Left colon (tissue), 2 donors: ENCODE measurements at regions of chr3 and their contacts with region 1.

Region 1: GRCh38 chr3:69691860-69692259 is 47.4 kb upstream of the MITF start:
- DNase-seq: no peak
- ATAC-seq: no peak

Region 2: GRCh38 chr3:69137011-69137410 is 554.8 kb before region 1 on chr3:
- intact Hi-C with region 1: no loop called
- DNase-seq: no peak
- ATAC-seq: no peak

Region 3: GRCh38 chr3:69791919-69792399 is 100.1 kb after region 1 on chr3:
- intact Hi-C with region 1: loop called in 1 of 2 experiments (anchors 2 kb)
- DNase-seq: no peak
- ATAC-seq: no peak

Region 4: DNA sequence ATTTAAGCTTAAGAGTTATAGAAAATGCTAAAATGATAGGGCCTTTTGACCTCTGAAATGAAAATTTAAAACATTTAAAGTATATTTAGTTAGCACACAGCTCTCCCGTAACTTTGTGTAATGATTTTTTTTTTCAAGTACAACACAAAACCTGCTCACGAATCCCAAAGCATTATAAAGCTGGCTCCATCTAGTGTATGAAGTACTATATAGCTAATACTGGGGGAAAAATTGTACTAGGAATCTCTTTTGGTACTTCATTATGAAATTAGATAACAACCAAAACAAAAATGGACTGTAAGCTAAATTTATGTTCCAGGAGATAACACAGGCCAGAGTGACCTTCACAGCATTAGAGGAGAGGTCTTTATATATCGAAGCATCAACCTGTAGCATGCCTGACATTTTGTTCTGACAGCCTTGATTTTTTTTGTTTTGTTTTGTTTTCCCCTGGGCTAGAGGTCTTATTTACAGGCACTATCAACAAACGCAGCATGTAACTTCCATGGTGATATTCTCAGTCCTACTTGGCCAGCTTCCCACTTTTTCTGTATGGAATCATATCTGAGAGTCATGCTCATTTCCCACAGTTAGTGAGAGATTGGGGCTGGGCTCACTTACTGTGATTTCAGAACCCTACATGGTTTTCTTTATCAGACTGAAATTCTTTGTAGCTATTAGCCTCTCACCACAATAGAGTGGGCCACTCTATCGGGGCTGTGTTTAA is 163.7 kb after region 1 on chr3:
- intact Hi-C with region 1: loop called in 1 of 2 experiments (anchors 10 kb)
- DNase-seq: no peak
- ATAC-seq: no peak

Region 5: DNA sequence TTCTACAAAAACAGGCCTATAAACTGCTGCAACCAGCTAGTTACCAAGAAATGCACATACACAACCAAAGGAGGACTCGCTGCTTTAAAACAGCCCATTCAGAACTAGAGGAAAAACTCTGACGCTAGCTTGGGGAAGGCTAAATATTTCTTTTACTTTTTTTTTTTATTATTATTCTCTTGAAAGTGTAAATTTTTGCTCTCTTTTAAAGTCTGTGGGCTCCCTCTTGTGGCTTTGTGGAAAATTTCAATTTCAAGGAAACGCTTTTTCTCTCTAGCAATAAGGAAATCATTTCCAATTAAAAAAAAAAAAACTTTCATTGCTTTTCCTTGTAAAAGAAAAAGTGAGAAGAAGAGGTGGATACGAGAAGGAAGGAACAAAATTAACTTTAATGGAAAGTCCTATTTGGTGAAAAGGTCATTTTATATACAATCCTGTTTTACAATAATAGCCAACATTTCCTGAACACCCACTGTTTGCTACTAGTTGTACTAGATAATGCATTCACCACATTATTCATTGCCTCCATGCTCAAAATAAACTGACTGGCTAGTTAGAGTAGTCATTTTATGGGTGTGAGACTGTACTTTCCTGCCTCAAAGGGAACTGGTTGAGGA is 256.5 kb after region 1 on chr3:
- intact Hi-C with region 1: loop called in 1 of 2 experiments (anchors 10 kb)
- DNase-seq: no peak
- ATAC-seq: peak; percentile 73